ENCODE measurements at regions of chr6 and their contacts with region 1.

Region 1: GRCh38 chr6:34414999-34415858 is 10.6 kb downstream of the RPS10 start:
- DNase-seq: peak; percentile 35
- H3K4me3 Mint-ChIP-seq: no peak overlapping the region
- H3K27ac Mint-ChIP-seq: peak overlapping the region; percentile 8
- H3K4me1 Mint-ChIP-seq: peaks cover 12% of the 10 kb centered on the region
- H3K27me3 Mint-ChIP-seq: no peaks in the 10 kb centered on the region

Region 2: GRCh38 chr6:34425498-34426410 is 10.5 kb after region 1 on chr6 and contains the start of gene RPS10:
- CTCF ChIA-PET with region 1: interaction called, 9 read pairs
- POLR2A ChIA-PET with region 1: interaction called, 34 read pairs
- intact Hi-C with region 1: no loop called
- DNase-seq: peak; percentile 94
- H3K4me3 Mint-ChIP-seq: peak within 1 kb of the TSS; percentile 99
- H3K27ac Mint-ChIP-seq: peak within 1 kb of the TSS; percentile 99
- H3K4me1 Mint-ChIP-seq: peaks cover 40% of the 10 kb centered on the region
- H3K27me3 Mint-ChIP-seq: no peaks in the 10 kb centered on the region
- total RNA-seq, gene RPS10: 2,106 to 2,169 TPM

Measured in activated CD4-positive, alpha-beta memory T cell treated with anti-CD3 and anti-CD28 coated beads for 36 hours (primary cell).